ENCODE measurements at regions of chrX and their contacts with region 1.

Region 1: GRCh38 chrX:153609917-153610428 is 11.0 kb upstream of the CCNQ start:
- DNase-seq: peak; percentile 80
- H3K4me3 Mint-ChIP-seq: peak overlapping the region; percentile 69
- H3K27ac Mint-ChIP-seq: no peak overlapping the region
- H3K4me1 Mint-ChIP-seq: peaks cover 15% of the 10 kb centered on the region
- H3K27me3 Mint-ChIP-seq: peaks cover 62% of the 10 kb centered on the region

Region 2: GRCh38 chrX:153599192-153600031 is 10.6 kb before region 1 on chrX:
- CTCF ChIA-PET with region 1: interaction called, 19 read pairs
- DNase-seq: peak; percentile 90
- H3K4me3 Mint-ChIP-seq: peak overlapping the region; percentile 92
- H3K27ac Mint-ChIP-seq: peak overlapping the region; percentile 89
- H3K4me1 Mint-ChIP-seq: peaks cover 60% of the 10 kb centered on the region
- H3K27me3 Mint-ChIP-seq: peaks cover under 1% of the 10 kb centered on the region

Measured in activated naive CD4-positive, alpha-beta T cell treated with anti-CD3 and anti-CD28 coated beads, Interleukin-2, amount 10 ng/mL, durations not matched to agents 7 days and 5 days (primary cell).